HCT116 (cell line): ENCODE measurements at regions of chr1 and their contacts with region 1.

Region 1: GRCh38 chr1:102970498-102971078 is 137.7 kb downstream of the COL11A1 start:
- DNase-seq: peak; percentile 51
- ATAC-seq: peak; percentile 42; the same call in 1 of the 2 replicates
- H3K4me3 ChIP-seq: no peak overlapping the region
- H3K27ac ChIP-seq: no peak overlapping the region
- H3K4me1 ChIP-seq: no peaks in the 10 kb centered on the region
- H3K27me3 ChIP-seq: no peaks in the 10 kb centered on the region
- CTCF ChIP-seq: peak; percentile 28 to 69 (median 52); a peak in 5 of 6 replicates
- POLR2A ChIP-seq: no peak
- RAD21 ChIP-seq: peak; percentile 57

Region 2: GRCh38 chr1:101820071-101820470 is 1150.5 kb before region 1 on chr1:
- CTCF ChIA-PET with region 1: no interaction called
- POLR2A ChIA-PET with region 1: no interaction called
- RAD21 ChIA-PET with region 1: no interaction called
- intact Hi-C with region 1: loop called (anchors 5 kb)
- DNase-seq: peak; percentile 16
- ATAC-seq: peak; percentile 57; the same call in 1 of the 2 replicates
- H3K4me3 ChIP-seq: no peak overlapping the region
- H3K27ac ChIP-seq: no peak overlapping the region
- H3K4me1 ChIP-seq: no peaks in the 10 kb centered on the region
- H3K27me3 ChIP-seq: no peaks in the 10 kb centered on the region
- CTCF ChIP-seq: peak in 2 of 3 experiments; percentile 29 to 38; a peak in 2 of 6 replicates
- POLR2A ChIP-seq: no peak
- RAD21 ChIP-seq: peak; percentile 58

Region 3: GRCh38 chr1:102550729-102551384 is 419.7 kb before region 1 on chr1:
- CTCF ChIA-PET with region 1: interaction called, 10 read pairs
- POLR2A ChIA-PET with region 1: no interaction called
- RAD21 ChIA-PET with region 1: no interaction called
- intact Hi-C with region 1: no loop called
- DNase-seq: peak; percentile 21
- ATAC-seq: peak; percentile 82
- H3K4me3 ChIP-seq: no peak overlapping the region
- H3K27ac ChIP-seq: no peak overlapping the region
- H3K4me1 ChIP-seq: no peaks in the 10 kb centered on the region
- H3K27me3 ChIP-seq: no peaks in the 10 kb centered on the region
- CTCF ChIP-seq: peak; percentile 5 to 55 (median 43); a peak in 4 of 6 replicates
- POLR2A ChIP-seq: no peak
- RAD21 ChIP-seq: peak; percentile 29; the same call in 1 of the 2 replicates

Region 4: DNA sequence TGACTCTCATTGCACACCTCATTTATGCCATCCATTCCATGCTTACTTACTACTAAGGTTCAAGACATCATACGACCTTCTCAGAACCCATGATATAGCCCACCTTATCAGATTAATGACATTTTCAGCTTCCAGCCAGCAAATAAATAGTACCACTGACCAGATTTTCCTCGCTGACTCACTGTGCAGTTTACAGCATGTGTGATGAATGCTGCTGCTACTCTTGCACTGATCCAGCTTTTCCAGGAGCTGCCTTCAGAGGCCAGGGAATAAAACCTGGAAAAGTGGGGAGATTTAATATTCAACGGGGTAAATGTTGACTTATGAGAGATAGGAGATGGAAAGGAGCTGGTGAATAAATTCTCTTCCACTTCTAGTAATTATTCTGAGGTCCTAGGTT is 109.3 kb before region 1 on chr1:
- CTCF ChIA-PET with region 1: no interaction called
- POLR2A ChIA-PET with region 1: no interaction called
- RAD21 ChIA-PET with region 1: no interaction called
- intact Hi-C with region 1: no loop called
- DNase-seq: no peak
- ATAC-seq: no peak
- H3K4me3 ChIP-seq: no peak overlapping the region
- H3K27ac ChIP-seq: no peak overlapping the region
- H3K4me1 ChIP-seq: no peaks in the 10 kb centered on the region
- H3K27me3 ChIP-seq: no peaks in the 10 kb centered on the region
- CTCF ChIP-seq: no peak
- POLR2A ChIP-seq: no peak
- RAD21 ChIP-seq: no peak